Adrenal gland (tissue), 19 donors: ENCODE measurements at regions of chr12 and their contacts with region 1.

Region 1: GRCh38 chr12:101759396-101760047 is 20.3 kb upstream of the SYCP3 start:
- DNase-seq: peak in 1 of 7 donors; percentile 31
- H3K4me3 ChIP-seq: no peak overlapping the region
- H3K27ac ChIP-seq: no peak overlapping the region
- H3K4me1 ChIP-seq: no peaks in the 10 kb centered on the region
- H3K27me3 ChIP-seq: no peaks in the 10 kb centered on the region
- CTCF ChIP-seq: peak; percentile 74 to 83 (median 78)
- POLR2A ChIP-seq: no peak

Region 2: GRCh38 chr12:101490286-101490920 is 269.1 kb before region 1 on chr12:
- intact Hi-C with region 1: no loop called
- DNase-seq: peak in 1 of 7 donors; percentile 24
- H3K4me3 ChIP-seq: no peak overlapping the region
- H3K27ac ChIP-seq: no peak overlapping the region
- H3K4me1 ChIP-seq: peaks cover 2 to 4% of the 10 kb centered on the region in 2 donors
- H3K27me3 ChIP-seq: peaks cover 10% of the 10 kb centered on the region
- CTCF ChIP-seq: peak in 4 of 6 experiments; percentile 5 to 48 (median 28)
- POLR2A ChIP-seq: no peak

Region 3: GRCh38 chr12:101678081-101678480 is 81.4 kb before region 1 on chr12:
- intact Hi-C with region 1: loop called in 1 of 2 experiments (anchors 5 kb)
- DNase-seq: no peak
- H3K4me3 ChIP-seq: no peak overlapping the region
- H3K27ac ChIP-seq: no peak overlapping the region
- H3K4me1 ChIP-seq: peaks cover 0 to 15% of the 10 kb centered on the region in 2 donors
- H3K27me3 ChIP-seq: no peaks in the 10 kb centered on the region
- CTCF ChIP-seq: no peak
- POLR2A ChIP-seq: no peak

Region 4: GRCh38 chr12:101773650-101774162 is 14.2 kb after region 1 on chr12:
- intact Hi-C with region 1: no loop called
- DNase-seq: peak; percentile 54 to 83 (median 61)
- H3K4me3 ChIP-seq: no peak overlapping the region
- H3K27ac ChIP-seq: no peak overlapping the region
- H3K4me1 ChIP-seq: no peaks in the 10 kb centered on the region
- H3K27me3 ChIP-seq: no peaks in the 10 kb centered on the region
- CTCF ChIP-seq: peak; percentile 93 to 99 (median 94)
- POLR2A ChIP-seq: no peak